Mammary epithelial cell (primary cell): ENCODE measurements at regions of chr6 and their contacts with region 1.

Region 1: GRCh38 chr6:17673543-17674254 is 33.0 kb downstream of the NUP153 start:
- DNase-seq: peak; percentile 1
- H3K4me3 ChIP-seq: no peak overlapping the region
- H3K27ac ChIP-seq: no peak overlapping the region
- H3K4me1 ChIP-seq: no peaks in the 10 kb centered on the region
- H3K27me3 ChIP-seq: no peaks in the 10 kb centered on the region
- CTCF ChIP-seq: peak in 1 of 2 donors; percentile 1

Region 2: DNA sequence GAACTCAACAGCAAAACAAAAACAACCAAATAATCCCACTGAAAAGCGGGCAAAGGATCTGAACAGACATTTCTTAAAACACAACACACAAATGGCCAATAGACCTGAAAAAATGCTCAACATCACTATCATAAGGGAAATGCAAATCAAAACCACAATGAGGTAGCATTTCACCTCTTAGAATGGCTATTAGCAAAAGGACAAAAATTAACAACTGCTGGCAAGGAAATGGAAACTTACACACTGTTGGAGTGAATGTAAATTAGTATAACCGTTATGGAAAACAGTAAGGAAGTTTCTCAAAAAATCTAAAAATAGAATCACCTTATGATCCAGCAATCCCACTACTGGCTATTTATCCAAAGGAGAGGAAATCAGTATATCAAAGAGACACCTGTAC is 52.7 kb before region 1 on chr6:
- CTCF ChIA-PET with region 1: no interaction called
- dilution Hi-C with region 1: loop called (anchors 10 kb)
- in situ Hi-C with region 1: no loop called
- intact Hi-C with region 1: no loop called
- DNase-seq: no peak
- H3K4me3 ChIP-seq: no peak overlapping the region
- H3K27ac ChIP-seq: no peak overlapping the region
- H3K4me1 ChIP-seq: no peaks in the 10 kb centered on the region
- H3K27me3 ChIP-seq: no peaks in the 10 kb centered on the region
- CTCF ChIP-seq: no peak